ENCODE measurements at regions of chr7 and their contacts with region 1.

Region 1: GRCh38 chr7:51162724-51163329 is 153.8 kb downstream of the COBL start:
- DNase-seq: peak; percentile 61 to 89
- H3K4me3 ChIP-seq: no peak overlapping the region
- H3K27ac ChIP-seq: no peak overlapping the region
- H3K4me1 ChIP-seq: peaks cover 0 to 5% (median 0%) of the 10 kb centered on the region in 4 experiments; a peak in 2 of 7 replicates
- H3K27me3 ChIP-seq: no peaks in the 10 kb centered on the region
- CTCF ChIP-seq: peak in 2 of 3 experiments; percentile 92 to 94; a peak in 3 of 4 replicates
- EP300 ChIP-seq: no peak
- POLR2A ChIP-seq: no peak
- RAD21 ChIP-seq: peak; percentile 85 to 91

Region 2: DNA sequence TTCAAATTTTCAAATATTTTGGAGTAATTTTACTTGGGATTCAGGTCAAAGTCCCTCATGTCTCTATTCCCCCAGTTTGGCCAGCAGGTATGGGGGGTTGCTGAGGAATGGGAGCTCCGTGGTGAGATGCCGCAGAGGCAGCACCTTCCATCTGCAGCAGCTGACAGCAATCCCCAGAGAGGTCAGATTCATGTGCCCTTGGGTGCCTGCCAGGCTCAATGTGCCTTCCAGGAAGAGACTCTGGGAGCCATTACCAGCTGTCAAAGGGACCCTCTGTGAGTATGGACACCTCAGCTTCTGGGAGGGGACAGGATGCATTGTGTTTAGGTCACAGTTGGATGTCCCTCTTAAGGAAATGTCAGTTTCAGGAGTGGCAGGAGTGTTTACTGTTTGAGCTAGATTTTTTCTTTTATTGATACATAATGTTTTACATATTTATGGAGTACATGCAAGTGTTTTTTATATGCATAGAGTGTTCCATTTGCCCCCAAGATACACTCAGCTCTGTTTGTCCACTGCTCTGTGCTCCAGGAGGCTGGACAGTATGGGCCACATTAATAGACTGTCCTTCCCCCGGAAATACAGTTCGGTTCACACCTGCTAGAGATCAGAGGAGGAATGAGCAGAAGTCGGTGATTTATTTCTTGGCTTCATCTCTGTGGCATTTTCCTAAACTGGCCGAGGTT is 304.9 kb before region 1 on chr7:
- CTCF ChIA-PET with region 1: no interaction called
- POLR2A ChIA-PET with region 1: no interaction called
- DNase-seq: peak in 1 of 2 experiments; percentile 22
- H3K4me3 ChIP-seq: no peak overlapping the region
- H3K27ac ChIP-seq: no peak overlapping the region
- H3K4me1 ChIP-seq: no peaks in the 10 kb centered on the region
- H3K27me3 ChIP-seq: no peaks in the 10 kb centered on the region
- CTCF ChIP-seq: no peak
- EP300 ChIP-seq: no peak
- POLR2A ChIP-seq: no peak
- RAD21 ChIP-seq: no peak

Region 3: DNA sequence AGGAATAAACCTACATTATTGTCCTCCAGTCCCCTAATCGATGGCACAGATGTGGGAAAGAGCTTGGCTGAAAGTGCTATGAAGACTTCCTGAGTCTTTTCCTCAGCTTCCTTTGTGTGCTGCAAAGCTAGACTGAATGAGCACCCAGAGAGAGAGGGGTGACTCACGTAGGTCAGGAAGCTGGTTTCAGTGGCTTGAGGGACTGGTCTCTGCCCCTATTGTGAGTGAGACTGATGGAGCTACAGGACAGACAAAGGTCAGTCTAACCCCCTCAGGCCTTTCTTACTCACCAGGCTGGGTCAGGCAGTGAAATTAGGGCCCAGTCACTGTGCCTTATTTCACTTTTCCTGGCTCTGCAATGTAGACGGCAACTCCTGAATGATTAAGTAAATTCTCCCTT is 209.0 kb before region 1 on chr7:
- CTCF ChIA-PET with region 1: no interaction called
- POLR2A ChIA-PET with region 1: no interaction called
- DNase-seq: peak in 1 of 2 experiments; percentile 23
- H3K4me3 ChIP-seq: no peak overlapping the region
- H3K27ac ChIP-seq: no peak overlapping the region
- H3K4me1 ChIP-seq: peaks cover 0 to 2% (median 0%) of the 10 kb centered on the region in 4 experiments; a peak in 1 of 7 replicates
- H3K27me3 ChIP-seq: peaks cover 19 to 59% (median 48%) of the 10 kb centered on the region in 4 experiments
- CTCF ChIP-seq: no peak
- EP300 ChIP-seq: no peak
- POLR2A ChIP-seq: no peak
- RAD21 ChIP-seq: no peak

Region 4: GRCh38 chr7:51000956-51001355 is 161.9 kb before region 1 on chr7:
- CTCF ChIA-PET with region 1: interaction called, 10 read pairs
- POLR2A ChIA-PET with region 1: no interaction called
- DNase-seq: no peak
- H3K4me3 ChIP-seq: no peak overlapping the region
- H3K27ac ChIP-seq: no peak overlapping the region
- H3K4me1 ChIP-seq: no peaks in the 10 kb centered on the region
- H3K27me3 ChIP-seq: no peaks in the 10 kb centered on the region
- CTCF ChIP-seq: peak in 2 of 3 experiments; percentile 40 to 55; a peak in 3 of 4 replicates
- EP300 ChIP-seq: no peak
- POLR2A ChIP-seq: no peak
- RAD21 ChIP-seq: peak; percentile 62 to 73

Region 5: DNA sequence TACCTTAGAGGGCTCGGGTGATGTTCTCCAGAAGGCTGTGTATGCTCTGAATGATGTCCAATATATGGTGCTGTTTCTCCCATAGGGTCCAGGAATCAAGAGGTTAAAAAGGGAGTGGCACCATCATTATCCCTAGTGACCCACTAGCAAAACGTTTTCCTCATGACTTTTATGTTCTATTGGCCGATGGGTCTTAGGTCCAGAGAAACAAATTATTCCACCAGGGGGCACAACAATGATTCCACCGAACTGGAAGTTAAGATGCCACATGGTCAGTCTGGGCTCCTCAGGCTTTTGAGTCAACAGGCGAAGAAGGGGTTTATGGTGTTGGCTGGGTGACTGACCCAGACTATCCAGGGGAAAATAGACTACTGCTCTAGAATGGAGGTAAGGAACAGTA is 102.3 kb before region 1 on chr7:
- CTCF ChIA-PET with region 1: interaction called, 23 read pairs
- POLR2A ChIA-PET with region 1: no interaction called
- DNase-seq: no peak
- H3K4me3 ChIP-seq: no peak overlapping the region
- H3K27ac ChIP-seq: no peak overlapping the region
- H3K4me1 ChIP-seq: peaks cover 0 to 2% (median under 1%) of the 10 kb centered on the region in 4 experiments; a peak in 1 of 7 replicates
- H3K27me3 ChIP-seq: no peaks in the 10 kb centered on the region
- CTCF ChIP-seq: peak in 1 of 3 experiments; percentile 35; a peak in 1 of 4 replicates
- EP300 ChIP-seq: no peak
- POLR2A ChIP-seq: no peak
- RAD21 ChIP-seq: peak in 1 of 2 experiments; percentile 40; a peak in 2 of 4 replicates

Region 6: DNA sequence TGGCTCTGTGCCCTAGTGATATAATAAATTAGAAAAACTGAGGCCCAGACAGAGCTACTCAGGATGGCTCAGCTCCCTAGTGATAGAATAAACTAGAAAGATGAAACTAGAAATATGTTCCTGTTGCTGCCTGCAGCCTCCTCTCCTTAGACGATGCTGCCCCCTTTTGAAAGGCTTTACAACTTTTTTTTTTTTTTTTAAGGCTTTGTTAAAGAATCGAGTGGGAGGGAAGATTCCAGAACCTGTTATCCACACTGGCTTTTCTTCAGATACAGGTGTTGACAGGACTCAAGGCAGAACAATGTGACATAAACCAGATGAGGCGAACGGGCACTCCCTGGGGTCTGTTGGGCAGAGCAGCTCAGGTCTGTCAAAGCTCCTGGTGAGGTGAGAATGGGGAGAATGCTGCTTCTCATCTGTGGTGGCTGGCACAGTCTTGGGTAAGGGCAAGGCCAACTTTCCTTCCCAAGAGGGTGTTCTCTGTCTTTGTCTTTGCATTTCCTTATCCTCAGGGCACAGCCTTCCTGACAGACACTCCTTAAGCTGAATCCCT is 21.3 kb before region 1 on chr7:
- CTCF ChIA-PET with region 1: interaction called, 44 read pairs
- POLR2A ChIA-PET with region 1: no interaction called
- DNase-seq: peak in 1 of 2 experiments; percentile 52
- H3K4me3 ChIP-seq: no peak overlapping the region
- H3K27ac ChIP-seq: no peak overlapping the region
- H3K4me1 ChIP-seq: peaks cover 4 to 8% (median 6%) of the 10 kb centered on the region in 4 experiments
- H3K27me3 ChIP-seq: no peaks in the 10 kb centered on the region
- CTCF ChIP-seq: peak in 2 of 3 experiments; percentile 54 to 58; a peak in 2 of 4 replicates
- EP300 ChIP-seq: no peak
- POLR2A ChIP-seq: no peak
- RAD21 ChIP-seq: peak; percentile 85 to 86

Region 7: GRCh38 chr7:51182636-51183166 is 19.9 kb after region 1 on chr7:
- CTCF ChIA-PET with region 1: interaction called, 19 read pairs
- POLR2A ChIA-PET with region 1: no interaction called
- DNase-seq: no peak
- H3K4me3 ChIP-seq: no peak overlapping the region
- H3K27ac ChIP-seq: no peak overlapping the region
- H3K4me1 ChIP-seq: peaks cover 0 to 4% (median 1%) of the 10 kb centered on the region in 4 experiments; a peak in 4 of 7 replicates
- H3K27me3 ChIP-seq: no peaks in the 10 kb centered on the region
- CTCF ChIP-seq: no peak
- EP300 ChIP-seq: no peak
- POLR2A ChIP-seq: no peak
- RAD21 ChIP-seq: no peak

Region 8: DNA sequence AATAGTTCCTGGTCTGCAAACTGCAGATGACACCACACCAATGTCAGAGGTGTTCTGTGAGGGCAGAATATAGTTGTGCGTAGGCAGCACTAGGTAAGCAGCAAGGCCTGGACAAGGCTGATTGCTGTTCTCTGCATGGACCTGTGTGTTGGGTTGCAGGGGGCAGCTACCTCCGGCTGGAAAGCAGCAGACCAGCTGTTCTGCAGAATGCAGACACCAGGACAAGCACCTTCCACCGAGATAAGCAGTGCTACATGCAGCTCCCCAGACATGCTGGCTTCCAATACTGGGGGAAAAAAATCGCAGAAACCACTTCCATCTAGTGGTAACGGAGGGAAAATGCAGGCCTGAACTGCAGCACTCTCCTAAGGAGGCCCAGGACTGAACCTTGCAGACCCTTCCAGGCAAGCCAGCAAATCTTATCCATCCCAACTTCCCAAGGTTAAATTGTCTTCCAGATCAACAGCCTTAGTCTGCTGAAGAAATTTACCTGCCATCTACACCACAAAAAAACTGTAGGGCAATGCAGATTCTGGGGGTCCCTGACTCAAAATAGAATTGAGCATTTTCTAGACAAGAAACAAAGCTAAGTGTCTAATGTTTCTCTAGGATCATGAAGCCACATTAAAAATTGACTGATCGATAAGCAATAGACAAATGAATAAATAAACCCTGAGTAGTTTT is 204.2 kb after region 1 on chr7:
- CTCF ChIA-PET with region 1: interaction called, 155 read pairs
- POLR2A ChIA-PET with region 1: interaction called, 7 read pairs
- DNase-seq: peak; percentile 51 to 63
- H3K4me3 ChIP-seq: no peak overlapping the region
- H3K27ac ChIP-seq: no peak overlapping the region
- H3K4me1 ChIP-seq: peaks cover 7 to 15% (median 10%) of the 10 kb centered on the region in 4 experiments
- H3K27me3 ChIP-seq: no peaks in the 10 kb centered on the region
- CTCF ChIP-seq: peak; percentile 76 to 95 (median 89)
- EP300 ChIP-seq: no peak
- POLR2A ChIP-seq: no peak
- RAD21 ChIP-seq: peak; percentile 93 to 97

Measured in H1 (cell line).